ENCODE measurements at regions of chr12 and their contacts with region 1.

Region 1: GRCh38 chr12:106030210-106031175 is 108.3 kb downstream of the NUAK1 start:
- DNase-seq: peak; percentile 96
- ATAC-seq: peak; percentile 86
- H3K4me3 ChIP-seq: peak overlapping the region; percentile 13; the same call in 1 of the 2 replicates
- H3K27ac ChIP-seq: peak overlapping the region; percentile 95
- H3K4me1 ChIP-seq: peaks cover 18% of the 10 kb centered on the region
- H3K27me3 ChIP-seq: no peaks in the 10 kb centered on the region
- CTCF ChIP-seq: no peak
- POLR2A ChIP-seq: peak; percentile 46; the same call in 1 of the 2 replicates
- RAD21 ChIP-seq: peak; percentile 10; the same call in 1 of the 2 replicates

Region 2: DNA sequence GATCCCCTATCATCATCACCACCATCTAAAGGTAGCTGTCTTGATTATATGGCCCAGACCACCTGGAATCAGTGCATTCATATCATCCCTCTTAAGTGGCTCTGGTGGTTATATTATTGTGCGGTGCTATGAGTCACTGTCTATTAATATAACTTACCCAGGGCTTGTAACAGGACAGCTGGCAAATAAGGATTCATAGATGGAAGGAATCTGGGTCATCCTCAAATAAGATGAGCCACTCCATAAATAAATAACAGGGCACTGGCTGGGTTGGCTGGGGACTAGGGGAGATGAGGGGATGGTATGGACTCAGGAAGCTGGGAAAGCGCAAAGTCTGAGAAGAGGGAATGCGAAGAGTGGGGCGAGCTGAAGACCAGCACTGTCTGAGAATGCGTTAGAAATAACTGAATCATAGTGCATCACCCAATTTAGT is 107.8 kb before region 1 on chr12:
- CTCF ChIA-PET with region 1: no interaction called
- POLR2A ChIA-PET with region 1: no interaction called
- dilution Hi-C with region 1: no loop called
- in situ Hi-C with region 1: no loop called
- intact Hi-C with region 1: loop called (anchors 2 kb)
- DNase-seq: peak; percentile 91
- ATAC-seq: peak; percentile 91
- H3K4me3 ChIP-seq: no peak overlapping the region
- H3K27ac ChIP-seq: no peak overlapping the region
- H3K4me1 ChIP-seq: peaks cover 11% of the 10 kb centered on the region
- H3K27me3 ChIP-seq: no peaks in the 10 kb centered on the region
- CTCF ChIP-seq: no peak
- POLR2A ChIP-seq: no peak
- RAD21 ChIP-seq: peak; percentile 30

Region 3: DNA sequence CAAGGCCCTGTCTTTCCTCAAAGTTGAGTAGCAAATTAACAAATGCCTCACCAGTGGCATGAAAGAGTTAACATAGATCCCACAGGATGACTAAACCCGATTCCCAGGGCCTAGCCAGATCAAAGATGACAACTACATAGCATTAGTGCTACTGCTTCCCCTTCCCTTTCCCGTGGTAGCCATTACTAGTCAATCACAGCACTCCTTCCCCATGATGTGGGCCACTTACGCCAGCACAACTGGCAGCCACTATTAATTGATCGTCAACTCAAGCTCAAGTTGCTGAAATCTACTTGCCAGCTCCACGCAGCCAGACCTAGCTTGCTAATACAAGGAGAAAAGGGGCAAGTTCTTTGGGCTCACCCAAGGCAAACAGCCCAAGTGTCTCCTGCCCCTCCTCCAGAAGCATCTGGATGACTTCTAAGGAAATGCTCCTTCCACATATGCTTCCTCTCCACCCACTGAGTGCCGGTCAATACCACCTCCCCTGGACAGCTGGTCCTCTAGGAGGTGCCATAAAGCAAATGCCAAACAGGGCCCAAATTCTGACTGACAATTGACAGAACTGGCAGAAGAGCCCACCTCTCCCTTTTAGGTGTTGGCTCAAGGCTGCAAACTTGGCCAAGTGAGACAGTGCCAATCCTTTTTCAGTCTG is 35.7 kb after region 1 on chr12:
- CTCF ChIA-PET with region 1: no interaction called
- POLR2A ChIA-PET with region 1: no interaction called
- dilution Hi-C with region 1: no loop called
- in situ Hi-C with region 1: no loop called
- intact Hi-C with region 1: no loop called
- DNase-seq: peak; percentile 47
- ATAC-seq: no peak
- H3K4me3 ChIP-seq: no peak overlapping the region
- H3K27ac ChIP-seq: no peak overlapping the region
- H3K4me1 ChIP-seq: peaks cover 2% of the 10 kb centered on the region
- H3K27me3 ChIP-seq: no peaks in the 10 kb centered on the region
- CTCF ChIP-seq: no peak
- POLR2A ChIP-seq: no peak
- RAD21 ChIP-seq: no peak